ENCODE measurements at regions of chr9 and their contacts with region 1.

Region 1: GRCh38 chr9:74570879-74571512 is 73.9 kb downstream of the RORB start:
- DNase-seq: peak; percentile 9
- H3K4me3 ChIP-seq: no peak overlapping the region
- H3K27ac ChIP-seq: no peak overlapping the region
- H3K4me1 ChIP-seq: no peaks in the 10 kb centered on the region
- H3K27me3 ChIP-seq: no peaks in the 10 kb centered on the region
- CTCF ChIP-seq: peak; percentile 76 to 86

Region 2: DNA sequence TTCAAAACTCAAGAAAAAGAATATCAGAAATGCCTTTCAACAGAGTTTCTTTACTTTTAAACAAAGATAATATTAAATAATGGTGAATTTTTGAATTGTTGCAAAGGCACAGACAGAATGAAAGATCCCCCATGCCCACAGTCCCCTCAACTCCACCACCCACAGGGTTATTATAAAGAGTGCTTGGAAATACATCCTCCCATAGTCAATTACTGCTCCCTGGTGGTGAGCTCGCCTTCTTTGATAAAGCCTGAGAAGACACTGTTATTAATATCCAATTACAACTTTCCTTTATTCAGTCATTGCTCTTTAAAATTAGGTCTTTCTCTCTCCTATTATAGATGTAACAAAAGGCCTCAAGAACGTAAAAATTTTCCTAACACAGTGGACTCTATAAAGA is 564.1 kb before region 1 on chr9:
- CTCF ChIA-PET with region 1: no interaction called
- dilution Hi-C with region 1: no loop called
- in situ Hi-C with region 1: no loop called
- intact Hi-C with region 1: loop called (anchors 5 kb)
- DNase-seq: no peak
- H3K4me3 ChIP-seq: no peak overlapping the region
- H3K27ac ChIP-seq: no peak overlapping the region
- H3K4me1 ChIP-seq: no peaks in the 10 kb centered on the region
- H3K27me3 ChIP-seq: no peaks in the 10 kb centered on the region
- CTCF ChIP-seq: peak in 1 of 2 donors; percentile 50

Region 3: GRCh38 chr9:74309654-74310053 is 261.3 kb before region 1 on chr9:
- CTCF ChIA-PET with region 1: no interaction called
- dilution Hi-C with region 1: no loop called
- in situ Hi-C with region 1: no loop called
- intact Hi-C with region 1: loop called (anchors 5 kb)
- DNase-seq: no peak
- H3K4me3 ChIP-seq: no peak overlapping the region
- H3K27ac ChIP-seq: no peak overlapping the region
- H3K4me1 ChIP-seq: no peaks in the 10 kb centered on the region
- H3K27me3 ChIP-seq: no peaks in the 10 kb centered on the region
- CTCF ChIP-seq: peak in 1 of 2 donors; percentile 27

Region 4: GRCh38 chr9:74760031-74760698 is 189.2 kb after region 1 on chr9:
- CTCF ChIA-PET with region 1: no interaction called
- dilution Hi-C with region 1: no loop called
- in situ Hi-C with region 1: no loop called
- intact Hi-C with region 1: no loop called
- DNase-seq: peak; percentile 93
- H3K4me3 ChIP-seq: no peak overlapping the region
- H3K27ac ChIP-seq: peak overlapping the region; percentile 0
- H3K4me1 ChIP-seq: peaks cover 8% of the 10 kb centered on the region
- H3K27me3 ChIP-seq: no peaks in the 10 kb centered on the region
- CTCF ChIP-seq: no peak